SK-N-SH (cell line): ENCODE measurements at regions of chr5 and their contacts with region 1.

Region 1: GRCh38 chr5:157132281-157132612 is 10.4 kb downstream of the MED7 start:
- DNase-seq: no peak
- H3K4me3 ChIP-seq: no peak overlapping the region
- H3K27ac ChIP-seq: no peak overlapping the region
- H3K4me1 ChIP-seq: peaks cover 0 to 3% of the 10 kb centered on the region in 2 experiments; a peak in 2 of 4 replicates
- H3K27me3 ChIP-seq: no peaks in the 10 kb centered on the region
- CTCF ChIP-seq: no peak
- EP300 ChIP-seq: no peak
- RAD21 ChIP-seq: no peak

Region 2: DNA sequence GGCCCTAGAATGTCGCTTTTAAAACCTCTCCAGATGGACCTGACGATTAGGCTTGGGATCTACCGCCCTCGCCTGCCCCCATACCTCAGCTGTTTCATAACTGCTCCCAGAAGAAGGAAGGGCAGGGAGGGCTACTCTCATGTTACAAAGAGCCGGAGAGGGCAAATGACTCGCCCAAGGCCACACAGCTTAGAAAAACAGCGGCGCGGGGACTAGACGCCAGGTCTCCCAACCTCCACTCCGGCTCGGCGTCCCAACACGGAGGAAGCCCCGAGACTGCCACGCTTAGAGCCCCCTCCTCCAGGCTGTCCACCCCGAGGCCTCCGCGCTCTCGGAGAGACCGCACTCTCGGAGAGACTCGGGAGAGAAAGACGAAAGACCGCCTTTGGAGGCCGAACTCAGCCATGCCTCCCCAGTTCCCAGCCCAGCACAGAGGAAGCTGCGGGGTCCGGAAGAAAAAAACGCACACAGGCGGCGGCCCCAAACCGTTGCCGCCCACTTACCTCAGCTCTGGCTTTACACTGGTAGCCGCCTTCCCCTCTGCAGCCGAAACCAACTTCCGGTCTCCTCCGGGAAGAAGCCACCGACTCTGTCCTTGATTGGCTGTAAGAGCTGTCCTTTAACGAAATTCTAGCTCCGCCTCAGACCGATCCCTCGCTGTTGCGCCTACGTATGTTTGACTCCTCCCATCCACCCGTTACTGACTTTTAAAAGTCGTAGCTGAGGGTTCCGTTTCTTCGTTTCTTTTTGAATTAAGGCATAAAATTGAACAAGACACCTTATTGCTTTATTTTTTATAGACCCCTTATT is 10.3 kb after region 1 on chr5 and contains the start of gene MED7:
- CTCF ChIA-PET with region 1: interaction called, 13 read pairs
- POLR2A ChIA-PET with region 1: interaction called, 7 read pairs
- DNase-seq: peak; percentile 90
- H3K4me3 ChIP-seq: peak within 1 kb of the TSS; percentile 96 to 99
- H3K27ac ChIP-seq: peak within 1 kb of the TSS; percentile 77 to 85
- H3K4me1 ChIP-seq: peaks cover 0 to 9% of the 10 kb centered on the region in 2 experiments; a peak in 1 of 4 replicates
- H3K27me3 ChIP-seq: no peaks in the 10 kb centered on the region
- CTCF ChIP-seq: no peak
- EP300 ChIP-seq: no peak
- RAD21 ChIP-seq: no peak
- polyA plus RNA-seq, gene MED7: 5.3 and 8.1 TPM in 2 replicates